SK-N-SH (cell line): ENCODE measurements at regions of chr2 and their contacts with region 1.

Region 1: DNA sequence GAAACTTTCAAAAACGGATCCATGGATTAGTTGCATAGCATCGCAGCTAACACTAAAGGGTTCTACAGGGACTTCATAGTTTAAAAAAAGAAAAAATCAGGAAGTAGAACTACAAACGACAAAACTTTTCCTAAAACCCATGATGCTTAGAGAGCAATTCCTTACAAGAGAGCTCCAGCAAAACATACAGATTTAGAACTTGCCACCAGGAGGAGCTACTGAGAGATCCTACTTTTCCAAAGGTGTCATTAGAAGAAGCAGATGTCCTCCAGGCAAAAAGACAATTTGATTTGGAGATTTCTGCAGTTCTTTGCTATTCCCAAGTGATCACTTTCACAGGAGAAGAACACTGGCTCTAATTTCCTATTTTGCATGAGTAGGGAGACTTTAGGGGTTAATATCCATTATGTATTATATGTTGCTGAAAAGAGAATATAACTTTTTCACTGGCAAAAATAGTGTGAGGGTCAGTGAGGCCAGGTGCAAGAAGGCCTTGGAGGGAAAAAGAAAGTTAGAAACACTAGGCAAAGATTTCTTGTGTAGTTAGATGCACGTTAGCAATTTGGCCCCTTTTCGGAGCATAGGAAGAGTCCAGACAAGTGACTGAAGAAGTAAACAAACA is 436.2 kb downstream of the SUCLG1 start:
- DNase-seq: peak; percentile 16
- H3K4me3 ChIP-seq: no peak overlapping the region
- H3K27ac ChIP-seq: no peak overlapping the region
- H3K4me1 ChIP-seq: no peaks in the 10 kb centered on the region
- H3K27me3 ChIP-seq: no peaks in the 10 kb centered on the region
- CTCF ChIP-seq: peak; percentile 83
- EP300 ChIP-seq: no peak
- RAD21 ChIP-seq: peak; percentile 64

Region 2: GRCh38 chr2:83953697-83954096 is 69.2 kb before region 1 on chr2:
- CTCF ChIA-PET with region 1: no interaction called
- POLR2A ChIA-PET with region 1: no interaction called
- DNase-seq: no peak
- H3K4me3 ChIP-seq: no peak overlapping the region
- H3K27ac ChIP-seq: no peak overlapping the region
- H3K4me1 ChIP-seq: no peaks in the 10 kb centered on the region
- H3K27me3 ChIP-seq: no peaks in the 10 kb centered on the region
- CTCF ChIP-seq: no peak
- EP300 ChIP-seq: no peak
- RAD21 ChIP-seq: no peak

Region 3: GRCh38 chr2:84033347-84033974 is 10.5 kb after region 1 on chr2:
- CTCF ChIA-PET with region 1: interaction called, 14 read pairs
- POLR2A ChIA-PET with region 1: no interaction called
- DNase-seq: no peak
- H3K4me3 ChIP-seq: peak overlapping the region; percentile 12 to 38; a peak in 2 of 4 replicates
- H3K27ac ChIP-seq: no peak overlapping the region
- H3K4me1 ChIP-seq: no peaks in the 10 kb centered on the region
- H3K27me3 ChIP-seq: no peaks in the 10 kb centered on the region
- CTCF ChIP-seq: no peak
- EP300 ChIP-seq: no peak
- RAD21 ChIP-seq: no peak

Region 4: GRCh38 chr2:84160453-84160852 is 137.5 kb after region 1 on chr2:
- CTCF ChIA-PET with region 1: no interaction called
- POLR2A ChIA-PET with region 1: no interaction called
- DNase-seq: no peak
- H3K4me3 ChIP-seq: no peak overlapping the region
- H3K27ac ChIP-seq: no peak overlapping the region
- H3K4me1 ChIP-seq: no peaks in the 10 kb centered on the region
- H3K27me3 ChIP-seq: no peaks in the 10 kb centered on the region
- CTCF ChIP-seq: no peak
- EP300 ChIP-seq: no peak
- RAD21 ChIP-seq: no peak

Region 5: GRCh38 chr2:84302513-84303412 is 279.8 kb after region 1 on chr2:
- CTCF ChIA-PET with region 1: interaction called, 15 read pairs
- POLR2A ChIA-PET with region 1: no interaction called
- DNase-seq: peak; percentile 64
- H3K4me3 ChIP-seq: no peak overlapping the region; a peak in 1 of 4 replicates
- H3K27ac ChIP-seq: no peak overlapping the region
- H3K4me1 ChIP-seq: no peaks in the 10 kb centered on the region
- H3K27me3 ChIP-seq: peaks cover 5% of the 10 kb centered on the region; the same call in 1 of the 2 replicates
- CTCF ChIP-seq: peak; percentile 82
- EP300 ChIP-seq: no peak
- RAD21 ChIP-seq: peak; percentile 74

Region 6: GRCh38 chr2:84314901-84315330 is 292.0 kb after region 1 on chr2:
- CTCF ChIA-PET with region 1: interaction called, 47 read pairs
- POLR2A ChIA-PET with region 1: no interaction called
- DNase-seq: peak; percentile 62
- H3K4me3 ChIP-seq: no peak overlapping the region
- H3K27ac ChIP-seq: no peak overlapping the region
- H3K4me1 ChIP-seq: peaks cover 0 to 5% of the 10 kb centered on the region in 2 experiments; a peak in 1 of 4 replicates
- H3K27me3 ChIP-seq: peaks cover 8% of the 10 kb centered on the region; the same call in 1 of the 2 replicates
- CTCF ChIP-seq: peak; percentile 86
- EP300 ChIP-seq: no peak
- RAD21 ChIP-seq: peak; percentile 88